Heart right ventricle (tissue), 16 donors: ENCODE measurements at regions of chrX and their contacts with region 1.

Region 1: DNA sequence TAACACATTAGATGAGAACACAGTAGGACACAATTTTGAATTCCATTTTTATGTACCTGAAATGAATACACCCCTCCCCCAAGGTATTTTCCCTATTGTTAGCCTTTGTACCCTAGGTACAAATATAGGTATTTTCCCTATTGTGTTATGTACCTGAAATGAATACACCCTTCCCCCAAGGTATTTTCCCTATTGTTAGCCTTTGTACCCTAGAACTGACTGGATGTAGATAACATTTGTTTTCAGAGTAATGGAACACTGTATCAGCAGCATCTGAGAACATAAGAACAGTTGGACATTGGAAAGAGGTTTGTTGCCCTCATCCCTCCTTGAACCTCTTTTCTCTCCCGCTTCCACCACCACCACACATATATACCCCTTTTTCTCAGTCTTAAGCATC is 37.6 kb downstream of the YIPF6 start:
- DNase-seq: no peak
- ATAC-seq: peak in 1 of 8 donors; percentile 29
- H3K4me3 ChIP-seq: no peak overlapping the region
- H3K27ac ChIP-seq: no peak overlapping the region
- H3K4me1 ChIP-seq: no peaks in the 10 kb centered on the region
- H3K27me3 ChIP-seq: peaks cover 0 to 56% (median 0%) of the 10 kb centered on the region in 7 donors
- CTCF ChIP-seq: no peak

Region 2: GRCh38 chrX:68415316-68415715 is 121.1 kb before region 1 on chrX:
- intact Hi-C with region 1: no loop called
- DNase-seq: peak; percentile 28 to 40
- ATAC-seq: peak in 7 of 8 donors; percentile 58 to 92 (median 81)
- H3K4me3 ChIP-seq: no peak overlapping the region
- H3K27ac ChIP-seq: peak overlapping the region in 4 of 10 donors; percentile 25 to 48 (median 37)
- H3K4me1 ChIP-seq: peaks cover 0 to 43% (median 11%) of the 10 kb centered on the region in 9 donors
- H3K27me3 ChIP-seq: peaks cover 0 to 19% (median 0%) of the 10 kb centered on the region in 7 donors
- CTCF ChIP-seq: no peak

Region 3: DNA sequence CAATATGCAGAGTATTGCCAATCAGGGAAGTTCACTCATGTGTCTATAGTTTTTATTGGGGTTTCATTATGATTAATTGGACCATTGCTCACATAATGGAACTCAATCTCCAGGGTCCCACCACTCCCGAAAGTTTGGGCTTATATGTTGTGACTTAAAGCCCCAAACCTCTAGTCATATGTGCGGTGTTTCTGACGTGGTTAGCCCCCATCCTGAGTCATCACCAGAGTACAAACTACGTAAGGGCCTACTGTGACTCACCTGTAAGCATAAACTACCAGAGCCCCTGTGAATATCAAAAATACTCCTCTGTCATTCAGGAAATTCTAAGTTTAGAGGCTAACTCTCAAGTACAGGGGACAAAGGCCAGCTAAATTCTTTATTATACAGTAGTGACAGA is 32.2 kb before region 1 on chrX:
- intact Hi-C with region 1: no loop called
- DNase-seq: no peak
- ATAC-seq: no peak
- H3K4me3 ChIP-seq: no peak overlapping the region
- H3K27ac ChIP-seq: no peak overlapping the region
- H3K4me1 ChIP-seq: peaks cover 0 to 57% (median 26%) of the 10 kb centered on the region in 9 donors
- H3K27me3 ChIP-seq: peaks cover 0 to 15% (median 0%) of the 10 kb centered on the region in 7 donors
- CTCF ChIP-seq: no peak

Region 4: DNA sequence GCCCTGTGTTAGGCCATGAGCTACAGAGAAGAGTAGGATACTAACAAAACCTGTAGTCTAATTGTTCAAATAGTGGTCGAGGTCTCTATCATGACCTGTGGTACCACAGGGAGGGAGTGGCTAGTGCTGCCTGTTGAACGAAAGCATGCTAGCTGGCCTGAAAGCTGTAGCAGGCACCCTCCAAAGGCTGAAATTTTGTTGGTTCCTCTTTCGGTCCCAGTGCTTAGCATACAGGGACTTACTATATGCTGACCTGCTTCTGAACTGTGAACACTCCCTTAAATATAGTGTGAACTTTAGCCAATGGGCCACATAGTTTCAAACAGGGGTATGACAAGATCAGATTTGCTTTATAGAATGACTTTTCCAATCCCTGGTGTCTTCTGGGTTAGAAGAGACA is 515.5 kb after region 1 on chrX:
- intact Hi-C with region 1: loop called in 1 of 10 experiments (anchors 10 kb)
- DNase-seq: no peak
- ATAC-seq: no peak
- H3K4me3 ChIP-seq: no peak overlapping the region
- H3K27ac ChIP-seq: no peak overlapping the region
- H3K4me1 ChIP-seq: no peaks in the 10 kb centered on the region
- H3K27me3 ChIP-seq: peaks cover 0 to 32% (median 0%) of the 10 kb centered on the region in 7 donors
- CTCF ChIP-seq: no peak